ENCODE measurements at regions of chr16 and their contacts with region 1.

Region 1: GRCh38 chr16:8674413-8675022 is at the start of gene ABAT:
- DNase-seq: peak; percentile 80 to 85 (median 82)
- H3K4me3 ChIP-seq: peak within 1 kb of the TSS; percentile 35 to 77 (median 48)
- H3K4me3 Mint-ChIP-seq: peak within 1 kb of the TSS; percentile 77 to 90
- H3K27ac ChIP-seq: no peak within 1 kb of the TSS
- H3K27ac Mint-ChIP-seq: peak within 1 kb of the TSS in 5 of 7 donors; percentile 12 to 80 (median 41)
- H3K4me1 ChIP-seq: peaks cover 10 to 14% of the 10 kb centered on the region in 2 donors
- H3K4me1 Mint-ChIP-seq: peaks cover 13% of the 10 kb centered on the region
- H3K27me3 ChIP-seq: peaks cover 0 to 3% of the 10 kb centered on the region in 2 donors
- H3K27me3 Mint-ChIP-seq: peaks cover 4 to 8% (median 5%) of the 10 kb centered on the region in 3 donors
- CTCF ChIP-seq: no peak
- polyA plus RNA-seq, gene ABAT: 4.9 to 11.8 (median 8.7) TPM

Region 2: GRCh38 chr16:8512941-8513624 is 161.4 kb before region 1 on chr16:
- intact Hi-C with region 1: no loop called
- DNase-seq: no peak
- H3K4me3 ChIP-seq: no peak overlapping the region
- H3K4me3 Mint-ChIP-seq: no peak overlapping the region
- H3K27ac ChIP-seq: no peak overlapping the region
- H3K27ac Mint-ChIP-seq: no peak overlapping the region
- H3K4me1 ChIP-seq: no peaks in the 10 kb centered on the region
- H3K4me1 Mint-ChIP-seq: no peaks in the 10 kb centered on the region
- H3K27me3 ChIP-seq: no peaks in the 10 kb centered on the region
- H3K27me3 Mint-ChIP-seq: peaks cover 2 to 6% (median 5%) of the 10 kb centered on the region in 3 donors
- CTCF ChIP-seq: no peak

Region 3: DNA sequence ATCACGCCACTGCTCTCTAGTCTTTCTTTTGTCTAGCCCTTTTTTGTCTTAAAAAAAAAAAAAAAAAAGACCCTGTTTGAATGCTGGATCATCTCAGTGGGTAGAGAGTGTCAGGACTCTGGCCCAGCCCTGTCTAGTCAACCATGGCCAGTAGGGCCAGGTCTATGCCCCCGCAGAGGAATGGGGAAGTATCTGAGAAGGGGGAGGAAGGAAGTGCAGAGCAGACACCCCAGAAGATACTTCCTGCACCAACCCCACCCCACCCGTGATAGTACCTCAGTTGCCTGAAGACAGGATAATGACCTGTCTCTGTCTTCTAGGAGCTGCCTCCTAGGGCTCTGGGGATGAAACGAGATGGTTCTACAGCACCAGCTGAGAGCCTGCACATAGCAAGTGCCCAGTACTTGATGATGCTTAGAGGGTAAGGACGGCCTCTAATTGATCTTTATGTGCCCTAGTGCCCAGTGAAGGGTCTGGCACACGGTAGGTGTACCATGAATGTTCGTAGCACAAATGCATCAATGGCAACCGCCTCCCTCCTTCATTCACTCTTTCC is 55.3 kb after region 1 on chr16:
- intact Hi-C with region 1: loop called in 1 of 2 experiments (anchors 10 kb)
- DNase-seq: peak in 2 of 3 donors; percentile 44 to 56
- H3K4me3 ChIP-seq: peak overlapping the region in 1 of 3 experiments; percentile 61
- H3K4me3 Mint-ChIP-seq: no peak overlapping the region
- H3K27ac ChIP-seq: peak overlapping the region in 1 of 2 donors; percentile 67
- H3K27ac Mint-ChIP-seq: peak overlapping the region in 3 of 7 donors; percentile 26 to 77 (median 75)
- H3K4me1 ChIP-seq: peaks cover 8 to 53% of the 10 kb centered on the region in 2 donors
- H3K4me1 Mint-ChIP-seq: peaks cover 16% of the 10 kb centered on the region
- H3K27me3 ChIP-seq: no peaks in the 10 kb centered on the region
- H3K27me3 Mint-ChIP-seq: peaks cover 0 to 4% (median 2%) of the 10 kb centered on the region in 3 donors
- CTCF ChIP-seq: no peak

Region 4: GRCh38 chr16:8797364-8798173 is 123.1 kb after region 1 on chr16 and contains the starts of genes PMM2 and TMEM186:
- intact Hi-C with region 1: loop called (anchors 5 to 10 kb)
- DNase-seq: peak; percentile 93 to 96 (median 94)
- H3K4me3 ChIP-seq: peak within 1 kb of the TSS; percentile 65 to 91 (median 71)
- H3K4me3 Mint-ChIP-seq: peak within 1 kb of the TSS; percentile 96 to 98
- H3K27ac ChIP-seq: peak within 1 kb of the TSS; percentile 21 to 89
- H3K27ac Mint-ChIP-seq: peak within 1 kb of the TSS; percentile 81 to 98 (median 90)
- H3K4me1 ChIP-seq: peaks cover 29 to 37% of the 10 kb centered on the region in 2 donors
- H3K4me1 Mint-ChIP-seq: peaks cover 31% of the 10 kb centered on the region
- H3K27me3 ChIP-seq: no peaks in the 10 kb centered on the region
- H3K27me3 Mint-ChIP-seq: peaks cover 0 to 3% (median 0%) of the 10 kb centered on the region in 3 donors
- CTCF ChIP-seq: no peak
- polyA plus RNA-seq, gene PMM2: 15.2 to 22.9 (median 17.8) TPM
- polyA plus RNA-seq, gene TMEM186: 3.8 to 4.5 (median 4.4) TPM

Region 5: GRCh38 chr16:8868416-8869211 is 194.1 kb after region 1 on chr16 and contains the start of gene CARHSP1:
- intact Hi-C with region 1: loop called in 1 of 2 experiments (anchors 10 kb)
- DNase-seq: peak; percentile 81 to 86 (median 83)
- H3K4me3 ChIP-seq: peak within 1 kb of the TSS; percentile 83 to 90 (median 84)
- H3K4me3 Mint-ChIP-seq: peak within 1 kb of the TSS; percentile 93 to 96
- H3K27ac ChIP-seq: peak within 1 kb of the TSS; percentile 47 to 70
- H3K27ac Mint-ChIP-seq: peak within 1 kb of the TSS; percentile 67 to 97 (median 84)
- H3K4me1 ChIP-seq: peaks cover 38 to 58% of the 10 kb centered on the region in 2 donors
- H3K4me1 Mint-ChIP-seq: peaks cover 54% of the 10 kb centered on the region
- H3K27me3 ChIP-seq: no peaks in the 10 kb centered on the region
- H3K27me3 Mint-ChIP-seq: peaks cover 1 to 3% (median 2%) of the 10 kb centered on the region in 3 donors
- CTCF ChIP-seq: no peak
- polyA plus RNA-seq, gene CARHSP1: 32.0 to 60.3 (median 52.0) TPM

Measured in CD14-positive monocyte (primary cell).